ENCODE measurements at regions of chr12 and their contacts with region 1.

Region 1: GRCh38 chr12:79344855-79345847 is 345.6 kb downstream of the PAWR start:
- DNase-seq: peak; percentile 70 to 71
- H3K4me3 ChIP-seq: no peak overlapping the region
- H3K4me3 Mint-ChIP-seq: no peak overlapping the region
- H3K27ac Mint-ChIP-seq: no peak overlapping the region
- H3K4me1 ChIP-seq: peaks cover 8% of the 10 kb centered on the region; the same call in 1 of the 2 replicates
- H3K4me1 Mint-ChIP-seq: no peaks in the 10 kb centered on the region
- H3K27me3 ChIP-seq: no peaks in the 10 kb centered on the region
- H3K27me3 Mint-ChIP-seq: peaks cover 2% of the 10 kb centered on the region
- CTCF ChIP-seq: peak; percentile 78 to 90

Region 2: GRCh38 chr12:78470354-78471195 is 874.6 kb before region 1 on chr12:
- CTCF ChIA-PET with region 1: no interaction called
- POLR2A ChIA-PET with region 1: no interaction called
- intact Hi-C with region 1: loop called (anchors 10 kb)
- DNase-seq: peak; percentile 48 to 50
- H3K4me3 ChIP-seq: no peak overlapping the region
- H3K4me3 Mint-ChIP-seq: no peak overlapping the region
- H3K27ac Mint-ChIP-seq: no peak overlapping the region
- H3K4me1 ChIP-seq: no peaks in the 10 kb centered on the region
- H3K4me1 Mint-ChIP-seq: no peaks in the 10 kb centered on the region
- H3K27me3 ChIP-seq: no peaks in the 10 kb centered on the region
- H3K27me3 Mint-ChIP-seq: peaks cover 6% of the 10 kb centered on the region
- CTCF ChIP-seq: peak; percentile 65 to 74

Region 3: GRCh38 chr12:79045663-79045993 is 299.5 kb before region 1 on chr12:
- CTCF ChIA-PET with region 1: no interaction called
- POLR2A ChIA-PET with region 1: no interaction called
- intact Hi-C with region 1: no loop called
- DNase-seq: no peak
- H3K4me3 ChIP-seq: no peak overlapping the region
- H3K4me3 Mint-ChIP-seq: peak overlapping the region; percentile 63
- H3K27ac Mint-ChIP-seq: no peak overlapping the region
- H3K4me1 ChIP-seq: no peaks in the 10 kb centered on the region
- H3K4me1 Mint-ChIP-seq: no peaks in the 10 kb centered on the region
- H3K27me3 ChIP-seq: no peaks in the 10 kb centered on the region
- H3K27me3 Mint-ChIP-seq: no peaks in the 10 kb centered on the region
- CTCF ChIP-seq: no peak

Region 4: DNA sequence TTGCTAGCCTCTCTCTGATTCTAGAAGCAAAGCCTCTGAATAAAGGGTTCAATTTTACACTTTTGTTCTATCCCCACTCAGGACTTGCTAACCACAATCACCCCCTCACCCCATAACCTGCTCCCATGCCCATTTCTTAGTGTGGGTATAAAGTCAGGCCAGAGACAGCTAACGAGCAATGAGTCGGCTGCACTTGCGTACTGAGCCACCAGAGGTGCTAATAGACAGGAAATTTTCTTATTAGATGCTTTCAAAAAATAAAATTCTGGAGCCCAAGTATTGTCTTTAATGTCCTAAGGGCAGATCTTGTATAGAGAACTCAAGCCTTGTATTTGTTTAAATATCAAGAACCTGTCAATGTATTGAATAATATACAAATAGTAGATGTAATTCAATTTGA is 223.7 kb before region 1 on chr12:
- CTCF ChIA-PET with region 1: interaction called, 3 read pairs
- POLR2A ChIA-PET with region 1: no interaction called
- intact Hi-C with region 1: loop called (anchors 1 kb)
- DNase-seq: peak in 1 of 2 experiments; percentile 16
- H3K4me3 ChIP-seq: no peak overlapping the region
- H3K4me3 Mint-ChIP-seq: no peak overlapping the region
- H3K27ac Mint-ChIP-seq: no peak overlapping the region
- H3K4me1 ChIP-seq: no peaks in the 10 kb centered on the region
- H3K4me1 Mint-ChIP-seq: peaks cover 5% of the 10 kb centered on the region
- H3K27me3 ChIP-seq: no peaks in the 10 kb centered on the region
- H3K27me3 Mint-ChIP-seq: no peaks in the 10 kb centered on the region
- CTCF ChIP-seq: peak; percentile 42 to 58

Region 5: GRCh38 chr12:79274501-79275064 is 70.6 kb before region 1 on chr12:
- CTCF ChIA-PET with region 1: no interaction called
- POLR2A ChIA-PET with region 1: no interaction called
- intact Hi-C with region 1: loop called (anchors 2 kb)
- DNase-seq: no peak
- H3K4me3 ChIP-seq: no peak overlapping the region
- H3K4me3 Mint-ChIP-seq: no peak overlapping the region
- H3K27ac Mint-ChIP-seq: no peak overlapping the region
- H3K4me1 ChIP-seq: no peaks in the 10 kb centered on the region
- H3K4me1 Mint-ChIP-seq: no peaks in the 10 kb centered on the region
- H3K27me3 ChIP-seq: no peaks in the 10 kb centered on the region
- H3K27me3 Mint-ChIP-seq: peaks cover 5% of the 10 kb centered on the region
- CTCF ChIP-seq: no peak

Region 6: GRCh38 chr12:79358716-79359300 is 13.7 kb after region 1 on chr12:
- CTCF ChIA-PET with region 1: no interaction called
- POLR2A ChIA-PET with region 1: no interaction called
- intact Hi-C with region 1: loop called (anchors 1 kb)
- DNase-seq: no peak
- H3K4me3 ChIP-seq: no peak overlapping the region
- H3K4me3 Mint-ChIP-seq: no peak overlapping the region
- H3K27ac Mint-ChIP-seq: no peak overlapping the region
- H3K4me1 ChIP-seq: peaks cover 22% of the 10 kb centered on the region
- H3K4me1 Mint-ChIP-seq: peaks cover 21% of the 10 kb centered on the region
- H3K27me3 ChIP-seq: no peaks in the 10 kb centered on the region
- H3K27me3 Mint-ChIP-seq: no peaks in the 10 kb centered on the region
- CTCF ChIP-seq: no peak

Region 7: GRCh38 chr12:79381248-79382208 is 36.4 kb after region 1 on chr12:
- CTCF ChIA-PET with region 1: no interaction called
- POLR2A ChIA-PET with region 1: no interaction called
- intact Hi-C with region 1: no loop called
- DNase-seq: no peak
- H3K4me3 ChIP-seq: no peak overlapping the region
- H3K4me3 Mint-ChIP-seq: no peak overlapping the region
- H3K27ac Mint-ChIP-seq: no peak overlapping the region
- H3K4me1 ChIP-seq: peaks cover 19% of the 10 kb centered on the region
- H3K4me1 Mint-ChIP-seq: peaks cover 19% of the 10 kb centered on the region
- H3K27me3 ChIP-seq: no peaks in the 10 kb centered on the region
- H3K27me3 Mint-ChIP-seq: no peaks in the 10 kb centered on the region
- CTCF ChIP-seq: no peak

Region 8: DNA sequence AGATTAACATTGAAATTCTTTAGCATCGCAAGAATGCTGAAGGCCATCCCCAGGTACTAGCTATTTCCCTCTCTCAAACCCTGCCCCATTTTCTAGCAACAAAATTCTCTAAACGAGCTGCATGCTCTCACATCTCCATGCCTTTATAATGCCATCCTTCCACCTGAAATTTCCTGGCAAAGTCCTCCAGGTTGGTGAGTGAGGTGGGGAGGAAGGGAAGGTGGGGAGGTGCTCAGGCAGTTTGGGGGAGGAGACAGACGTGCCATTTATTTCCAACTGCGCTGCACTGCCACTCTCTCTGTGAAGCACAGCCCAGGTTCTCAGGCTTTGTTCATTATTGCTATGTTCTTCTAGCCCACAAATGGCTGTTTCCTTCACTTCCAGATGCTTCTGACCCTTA is 137.2 kb after region 1 on chr12:
- CTCF ChIA-PET with region 1: no interaction called
- POLR2A ChIA-PET with region 1: no interaction called
- intact Hi-C with region 1: no loop called
- DNase-seq: no peak
- H3K4me3 ChIP-seq: no peak overlapping the region
- H3K4me3 Mint-ChIP-seq: no peak overlapping the region
- H3K27ac Mint-ChIP-seq: no peak overlapping the region
- H3K4me1 ChIP-seq: peaks cover 5% of the 10 kb centered on the region; the same call in 1 of the 2 replicates
- H3K4me1 Mint-ChIP-seq: peaks cover 7% of the 10 kb centered on the region
- H3K27me3 ChIP-seq: no peaks in the 10 kb centered on the region
- H3K27me3 Mint-ChIP-seq: no peaks in the 10 kb centered on the region
- CTCF ChIP-seq: no peak

Measured in Caco-2 (cell line).